ENCODE measurements at regions of chr1 and their contacts with region 1.

Region 1: GRCh38 chr1:223712194-223712849 is at the start of gene CAPN2:
- DNase-seq: peak; percentile 83 to 91 (median 87)
- H3K4me3 ChIP-seq: peak within 1 kb of the TSS; percentile 37 to 92 (median 78)
- H3K27ac ChIP-seq: peak within 1 kb of the TSS; percentile 24 to 97 (median 94)
- H3K4me1 ChIP-seq: peaks cover 47 to 60% of the 10 kb centered on the region in 2 donors
- H3K27me3 ChIP-seq: no peaks in the 10 kb centered on the region
- CTCF ChIP-seq: peak; percentile 14 to 92 (median 68)
- POLR2A ChIP-seq: peak; percentile 84 to 95
- total RNA-seq, gene CAPN2: 117 to 214 (median 198) TPM

Region 2: DNA sequence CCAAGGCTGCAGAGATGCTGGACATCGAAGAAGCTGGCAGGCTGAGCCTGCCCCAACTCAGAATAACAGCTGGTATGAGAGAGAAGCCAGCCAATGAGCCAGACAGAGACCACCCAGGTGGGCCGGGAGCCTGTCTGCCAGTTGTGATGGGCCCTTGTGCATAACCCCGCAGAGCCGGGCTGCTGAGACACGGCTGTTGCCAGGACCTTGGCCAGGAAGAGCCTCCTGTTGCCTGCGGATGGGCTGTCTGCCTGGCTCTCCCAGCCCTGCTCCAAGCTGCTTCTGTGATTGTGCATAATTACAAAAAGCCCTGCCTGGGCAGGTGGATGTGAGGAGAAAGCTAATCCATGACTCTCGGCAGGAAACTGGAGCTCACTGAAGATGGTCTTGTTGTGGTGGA is 173.3 kb before region 1 on chr1:
- intact Hi-C with region 1: no loop called
- DNase-seq: no peak
- H3K4me3 ChIP-seq: no peak overlapping the region
- H3K27ac ChIP-seq: no peak overlapping the region
- H3K4me1 ChIP-seq: no peaks in the 10 kb centered on the region
- H3K27me3 ChIP-seq: no peaks in the 10 kb centered on the region
- CTCF ChIP-seq: no peak
- POLR2A ChIP-seq: no peak

Region 3: DNA sequence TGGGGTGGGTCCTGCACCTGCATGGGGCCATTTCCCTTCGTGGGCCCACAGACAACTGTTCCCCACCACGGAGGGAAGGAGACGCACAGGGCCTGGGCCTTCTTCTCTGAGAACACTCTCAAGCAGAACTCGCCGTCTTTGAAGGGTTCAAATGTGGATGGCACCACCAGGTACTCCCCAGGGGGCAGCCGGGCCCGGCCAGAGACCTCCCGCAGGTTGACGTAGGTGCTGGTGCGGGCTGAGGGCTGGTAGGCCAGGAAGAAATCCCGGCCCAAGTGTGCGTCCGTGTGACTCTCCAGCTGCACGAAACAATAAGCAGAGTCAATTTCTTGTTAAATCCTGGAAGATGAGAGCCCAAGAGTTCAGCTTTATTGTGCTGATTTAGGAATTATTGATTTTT is 103.3 kb before region 1 on chr1:
- intact Hi-C with region 1: no loop called
- DNase-seq: no peak
- H3K4me3 ChIP-seq: no peak overlapping the region
- H3K27ac ChIP-seq: no peak overlapping the region
- H3K4me1 ChIP-seq: no peaks in the 10 kb centered on the region
- H3K27me3 ChIP-seq: no peaks in the 10 kb centered on the region
- CTCF ChIP-seq: no peak
- POLR2A ChIP-seq: no peak

Region 4: DNA sequence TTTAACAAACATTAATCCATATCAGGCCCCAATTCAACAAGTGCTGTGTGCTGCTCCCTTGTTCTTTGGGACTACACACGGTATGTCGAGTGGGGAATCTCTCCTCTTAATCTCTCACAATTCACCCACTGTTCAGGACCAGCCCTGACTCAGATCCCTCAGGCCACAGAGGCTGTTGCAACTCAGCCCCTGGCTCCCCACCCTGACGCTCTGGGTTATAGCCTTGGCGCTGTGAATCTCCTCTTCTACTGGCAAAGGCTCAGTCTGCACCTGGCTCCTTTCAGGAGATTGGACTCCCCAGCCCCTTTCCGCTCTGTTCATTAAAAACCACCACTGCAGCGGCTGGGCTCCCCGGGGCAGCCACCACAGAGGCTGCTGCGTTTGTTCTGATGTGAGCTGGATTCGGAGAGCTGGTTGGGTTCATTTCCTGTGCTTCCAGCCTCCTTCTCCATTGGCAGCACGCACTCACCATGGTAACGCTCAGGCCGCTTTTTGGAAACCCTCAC is 59.8 kb before region 1 on chr1:
- intact Hi-C with region 1: no loop called
- DNase-seq: no peak
- H3K4me3 ChIP-seq: no peak overlapping the region
- H3K27ac ChIP-seq: no peak overlapping the region
- H3K4me1 ChIP-seq: no peaks in the 10 kb centered on the region
- H3K27me3 ChIP-seq: no peaks in the 10 kb centered on the region
- CTCF ChIP-seq: no peak
- POLR2A ChIP-seq: no peak

Region 5: DNA sequence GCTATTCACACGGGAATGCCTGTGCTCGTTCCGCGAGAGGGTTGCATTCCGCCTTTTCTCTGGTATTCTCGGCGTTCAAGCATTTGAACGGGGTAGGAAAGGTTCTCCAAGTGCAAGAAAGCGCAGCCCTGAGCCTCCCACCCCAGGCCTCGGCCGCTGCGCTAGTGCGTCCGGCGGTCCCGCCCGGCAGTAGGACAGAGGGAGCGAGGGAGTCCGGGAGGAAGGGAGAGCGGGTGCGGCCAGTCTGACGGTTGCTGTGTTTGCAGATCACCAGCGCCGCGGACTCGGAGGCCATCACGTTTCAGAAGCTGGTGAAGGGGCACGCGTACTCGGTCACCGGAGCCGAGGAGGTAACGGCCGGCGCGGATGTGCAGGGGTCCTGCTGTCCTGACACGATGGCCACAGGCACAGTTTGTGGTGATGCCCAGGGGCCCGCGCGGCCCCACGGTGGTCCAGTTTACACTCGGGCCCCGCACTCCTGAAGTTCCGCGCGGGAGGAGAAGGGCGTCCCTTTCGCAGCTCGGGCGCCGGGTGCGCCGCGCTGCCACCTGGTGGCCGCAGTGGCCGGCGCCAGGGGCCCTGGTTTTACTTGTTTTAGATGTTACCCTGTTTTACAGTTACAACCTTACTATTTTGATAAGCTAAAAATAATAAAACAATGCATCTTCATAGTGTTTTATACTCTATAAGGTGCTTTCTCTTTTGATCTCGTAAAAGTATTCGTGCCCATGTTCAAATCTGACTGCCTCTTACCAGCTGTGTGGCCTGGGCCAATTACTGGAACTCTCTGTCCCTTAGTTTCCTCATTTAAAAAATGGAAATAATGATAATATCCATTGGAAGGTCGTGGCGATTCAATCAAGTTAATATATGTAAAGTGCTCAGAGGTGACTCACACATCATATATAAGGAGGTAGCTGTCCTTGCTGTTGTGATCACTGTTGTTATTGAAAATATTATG is 36.7 kb after region 1 on chr1:
- intact Hi-C with region 1: loop called (anchors 2 to 5 kb)
- DNase-seq: peak; percentile 45 to 85 (median 72)
- H3K4me3 ChIP-seq: peak overlapping the region in 2 of 4 donors; percentile 12 to 61
- H3K27ac ChIP-seq: peak overlapping the region in 4 of 5 donors; percentile 25 to 88 (median 72)
- H3K4me1 ChIP-seq: peaks cover 18 to 19% of the 10 kb centered on the region in 2 donors
- H3K27me3 ChIP-seq: no peaks in the 10 kb centered on the region
- CTCF ChIP-seq: peak; percentile 84 to 98 (median 92)
- POLR2A ChIP-seq: no peak

Region 6: GRCh38 chr1:224113918-224114786 is 401.8 kb after region 1 on chr1 and contains the start of gene FBXO28:
- intact Hi-C with region 1: no loop called
- DNase-seq: peak; percentile 94 to 98 (median 96)
- H3K4me3 ChIP-seq: peak within 1 kb of the TSS; percentile 38 to 99 (median 73)
- H3K27ac ChIP-seq: peak within 1 kb of the TSS; percentile 42 to 95 (median 87)
- H3K4me1 ChIP-seq: peaks cover 12 to 27% of the 10 kb centered on the region in 2 donors
- H3K27me3 ChIP-seq: no peaks in the 10 kb centered on the region
- CTCF ChIP-seq: no peak
- POLR2A ChIP-seq: peak; percentile 82 to 85
- total RNA-seq, gene FBXO28: 19.1 to 39.1 (median 27.6) TPM

Measured in adrenal gland (tissue), 19 donors.